Motor neuron (in vitro differentiated cells): ENCODE measurements at regions of chr3 and their contacts with region 1.

Region 1: DNA sequence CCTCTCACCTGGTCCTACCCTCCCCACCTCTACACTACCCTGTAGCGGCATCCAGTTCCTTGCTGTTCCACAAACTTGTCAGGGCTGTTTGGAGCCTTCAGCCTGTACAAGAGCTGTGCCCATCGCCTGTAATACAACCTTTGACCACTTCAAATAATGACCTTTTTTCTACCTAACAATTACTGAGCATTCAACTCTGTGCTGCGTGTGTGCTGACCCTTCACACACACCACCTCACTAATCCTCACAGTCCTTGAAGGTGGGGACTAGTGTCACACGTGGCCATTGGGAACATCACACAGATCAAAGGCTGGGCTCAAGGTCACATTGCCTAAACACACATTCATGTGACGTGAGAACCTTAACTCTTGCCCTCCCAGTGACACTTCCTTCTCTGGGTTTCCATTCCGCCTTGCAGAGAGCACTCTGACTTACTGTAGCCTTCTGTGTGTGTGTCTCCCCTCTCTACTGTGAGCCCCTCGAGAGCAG is 3.1 kb downstream of the C3orf20 start:
- ATAC-seq: peak in 2 of 8 experiments; percentile 6 to 7
- H3K4me3 ChIP-seq: no peak overlapping the region
- H3K27ac ChIP-seq: no peak overlapping the region
- H3K4me1 ChIP-seq: peaks cover 0 to 16% of the 10 kb centered on the region in 2 donors

Region 2: DNA sequence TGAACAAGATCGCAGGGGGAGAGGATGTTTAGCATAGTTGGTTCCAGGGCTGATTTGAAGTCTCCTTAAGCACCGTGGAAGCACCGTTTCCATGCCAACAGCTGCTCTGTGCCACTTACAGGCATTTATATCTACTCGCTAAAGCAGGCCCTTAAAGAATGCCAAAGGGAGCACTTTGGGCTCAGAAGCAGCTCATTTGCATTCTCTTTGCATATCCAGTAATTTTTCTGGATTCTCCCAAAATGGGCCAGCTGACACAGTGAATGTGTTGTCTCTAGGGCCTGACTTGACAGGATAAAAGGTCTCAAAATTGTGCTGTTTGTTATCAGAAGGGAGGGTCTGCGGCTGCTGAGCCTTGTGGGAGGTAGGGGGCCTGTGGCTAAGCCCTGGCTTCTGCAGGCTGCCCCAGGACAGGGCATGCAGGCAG is 990.5 kb before region 1 on chr3:
- in situ Hi-C with region 1: no loop called
- ATAC-seq: peak; percentile 68 to 93 (median 86)
- H3K4me3 ChIP-seq: no peak overlapping the region
- H3K27ac ChIP-seq: peak overlapping the region in 1 of 2 donors; percentile 23
- H3K4me1 ChIP-seq: peaks cover 22 to 36% of the 10 kb centered on the region in 2 donors

Region 3: GRCh38 chr3:14780927-14781507 is 103.0 kb after region 1 on chr3:
- in situ Hi-C with region 1: loop called in 1 of 9 experiments (anchors 10 kb)
- ATAC-seq: peak in 5 of 8 experiments; percentile 9 to 68 (median 36)
- H3K4me3 ChIP-seq: no peak overlapping the region
- H3K27ac ChIP-seq: no peak overlapping the region
- H3K4me1 ChIP-seq: peaks cover 5 to 10% of the 10 kb centered on the region in 2 donors

Region 4: DNA sequence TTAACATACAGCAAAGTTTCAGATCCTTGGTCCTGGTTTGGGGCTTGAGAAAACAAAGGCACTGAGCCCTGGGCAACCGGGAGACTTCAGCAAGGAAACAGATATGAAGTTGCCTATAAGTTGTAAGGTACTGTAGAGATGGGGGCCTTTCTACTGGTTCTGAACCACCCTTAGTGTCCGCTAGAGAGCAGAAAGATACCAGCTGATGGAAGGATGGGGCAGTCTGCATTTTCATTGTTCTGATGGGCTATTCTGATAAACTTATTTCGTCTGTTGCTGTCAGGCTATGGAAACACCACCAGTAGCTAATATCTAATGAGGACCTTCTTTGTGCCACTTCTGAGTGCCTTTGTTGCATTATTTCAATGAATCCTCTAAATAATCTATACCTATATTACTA is 179.4 kb after region 1 on chr3:
- in situ Hi-C with region 1: no loop called
- ATAC-seq: peak in 1 of 8 experiments; percentile 36
- H3K4me3 ChIP-seq: no peak overlapping the region
- H3K27ac ChIP-seq: no peak overlapping the region
- H3K4me1 ChIP-seq: no peaks in the 10 kb centered on the region